ENCODE measurements at regions of chr10 and their contacts with region 1.

Region 1: DNA sequence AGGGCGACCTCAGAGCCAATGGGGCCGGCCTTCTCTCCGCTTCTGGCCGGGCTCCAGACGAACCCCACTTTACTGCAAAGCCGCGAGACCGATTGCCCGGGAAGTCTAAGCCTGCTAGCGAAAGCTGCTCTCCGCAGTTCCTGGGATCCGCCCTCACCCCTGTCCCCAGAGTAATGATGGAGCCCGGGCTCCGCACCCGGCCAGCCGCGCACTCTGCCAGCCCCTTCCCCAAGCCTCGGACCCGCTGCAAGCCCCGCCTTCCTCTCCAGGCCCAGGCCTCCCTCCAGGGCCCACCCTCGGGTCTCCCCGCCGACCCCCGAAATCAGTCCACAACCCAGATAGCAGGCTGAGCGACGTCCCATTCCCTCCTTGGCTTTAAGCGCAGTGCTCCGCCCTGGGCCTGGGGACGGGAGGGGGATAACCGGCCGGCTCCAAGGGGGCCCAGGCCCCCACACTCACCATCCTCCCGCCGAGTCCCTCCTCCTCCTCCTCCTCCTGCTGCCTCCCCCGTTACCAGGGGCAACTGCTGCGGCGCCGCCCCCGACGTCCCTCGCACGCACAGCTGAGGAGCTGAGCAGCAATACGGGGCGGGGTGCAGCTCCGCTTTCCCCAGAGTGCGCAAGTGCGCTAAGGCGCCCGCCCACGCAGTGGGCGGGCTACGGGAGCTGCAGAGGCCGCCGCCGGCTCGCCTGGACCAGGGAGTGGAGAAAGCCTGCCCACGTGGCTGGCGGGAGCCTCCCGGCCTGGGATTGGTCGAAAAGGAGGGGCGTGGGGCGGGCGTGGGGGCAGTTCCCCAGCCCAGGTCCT is at the start of gene ARL3:
- DNase-seq: peak; percentile 97 to 99 (median 98)
- H3K4me3 ChIP-seq: peak within 1 kb of the TSS; percentile 67
- H3K27ac ChIP-seq: peak within 1 kb of the TSS; percentile 82 to 90
- H3K4me1 ChIP-seq: peaks cover 11% of the 10 kb centered on the region
- H3K27me3 ChIP-seq: no peaks in the 10 kb centered on the region
- CTCF ChIP-seq: peak in 2 of 3 donors; percentile 37 to 52
- EP300 ChIP-seq: peak; percentile 39
- POLR2A ChIP-seq: peak; percentile 86
- total RNA-seq, gene ARL3: 9.5 to 25.6 (median 23.3) TPM

Region 2: DNA sequence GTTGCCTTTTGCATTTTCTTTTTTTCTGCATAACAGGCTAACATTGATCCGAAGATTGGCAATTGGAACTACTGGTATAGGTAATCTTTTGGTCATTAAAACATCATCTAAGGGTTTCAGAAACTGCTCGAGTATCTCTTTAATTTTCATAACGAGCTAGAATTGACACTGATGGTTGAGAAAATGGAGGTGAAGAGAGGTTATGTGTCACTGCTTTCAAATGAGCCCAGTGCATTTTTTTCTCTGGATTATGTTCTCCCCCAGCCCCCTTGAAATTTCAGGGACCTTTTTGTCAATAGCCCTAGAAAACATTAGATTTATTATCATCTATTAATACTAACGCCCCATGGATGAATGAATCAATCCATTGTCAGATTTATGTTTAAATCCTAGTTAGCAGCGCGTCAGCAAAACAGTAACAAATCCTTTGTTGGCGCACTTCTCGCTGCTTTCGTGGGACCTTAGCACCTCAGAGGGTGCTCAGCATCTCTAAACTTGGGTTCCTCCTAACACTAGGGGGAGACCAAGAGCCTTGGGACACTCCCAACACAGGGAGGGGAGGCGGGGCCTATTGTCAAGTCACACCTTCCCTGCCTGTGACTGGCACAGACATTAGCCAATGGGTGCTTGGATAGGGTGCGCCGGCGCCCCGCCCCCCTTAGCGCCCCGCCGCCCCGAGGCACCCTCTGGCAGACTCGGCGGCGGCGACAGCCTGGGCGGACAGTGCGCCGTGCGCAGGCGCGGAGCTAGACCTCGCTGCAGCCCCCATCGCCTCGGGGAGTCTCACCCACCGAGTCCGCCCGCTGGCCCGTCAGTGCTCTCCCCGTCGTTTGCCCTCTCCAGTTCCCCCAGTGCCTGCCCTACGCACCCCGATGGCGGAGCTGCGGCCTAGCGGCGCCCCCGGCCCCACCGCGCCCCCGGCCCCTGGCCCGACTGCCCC is 210.5 kb before region 1 on chr10 and contains the start of gene SUFU:
- intact Hi-C with region 1: loop called in 1 of 4 experiments (anchors 10 kb)
- DNase-seq: peak; percentile 98 to 99 (median 98)
- H3K4me3 ChIP-seq: peak within 1 kb of the TSS; percentile 97
- H3K27ac ChIP-seq: peak within 1 kb of the TSS; percentile 8 to 68
- H3K4me1 ChIP-seq: peaks cover 5% of the 10 kb centered on the region
- H3K27me3 ChIP-seq: no peaks in the 10 kb centered on the region
- CTCF ChIP-seq: peak; percentile 82 to 97 (median 95)
- EP300 ChIP-seq: no peak
- POLR2A ChIP-seq: no peak
- total RNA-seq, gene SUFU: 4.6 to 19.1 (median 16.1) TPM

Region 3: DNA sequence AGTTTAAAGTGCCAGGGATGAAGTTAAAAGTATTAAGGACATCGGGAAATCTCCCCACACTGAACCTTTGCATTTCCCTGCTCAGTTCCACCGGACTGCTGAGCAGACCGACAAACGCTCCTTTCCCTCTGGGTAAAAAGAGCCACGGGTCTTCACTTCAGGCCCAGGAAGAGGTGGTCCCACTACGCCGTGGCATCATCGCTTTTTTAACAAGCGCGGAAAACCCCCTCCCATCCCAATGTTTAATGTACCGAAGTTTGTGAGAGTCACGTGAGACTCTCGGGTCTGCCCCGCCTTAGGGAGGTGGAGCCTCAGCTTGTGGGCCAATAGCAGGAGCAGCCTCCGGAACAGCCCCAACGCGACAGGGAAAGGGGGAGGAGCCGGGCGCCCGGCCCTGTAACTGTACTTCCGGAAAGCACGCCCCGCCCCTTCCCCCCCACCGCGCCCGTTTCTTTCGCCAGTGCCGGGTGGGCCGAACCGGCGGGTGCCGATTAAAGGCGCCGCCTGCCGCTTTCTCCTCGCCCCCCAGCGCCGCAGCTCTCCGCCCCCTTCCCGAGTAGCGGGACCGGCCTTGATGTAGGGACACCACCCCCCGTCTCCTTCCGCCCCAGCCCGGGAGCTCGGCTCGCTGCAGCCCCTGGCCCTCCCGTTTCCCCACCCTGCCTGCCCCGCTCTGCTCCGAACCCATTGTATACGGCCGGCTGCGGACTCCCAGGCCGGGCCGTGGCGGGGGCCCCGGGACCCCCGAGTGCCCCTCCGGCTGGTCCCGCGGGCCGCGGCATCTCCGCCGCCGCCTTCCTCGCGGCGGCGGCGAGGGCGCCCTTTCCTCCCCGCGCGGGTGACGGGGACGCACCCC is 71.9 kb before region 1 on chr10:
- intact Hi-C with region 1: loop called in 3 of 4 experiments (anchors 2 to 10 kb)
- DNase-seq: peak; percentile 99
- H3K4me3 ChIP-seq: peak overlapping the region; percentile 69
- H3K27ac ChIP-seq: peak overlapping the region; percentile 91 to 98
- H3K4me1 ChIP-seq: peaks cover 3% of the 10 kb centered on the region
- H3K27me3 ChIP-seq: no peaks in the 10 kb centered on the region
- CTCF ChIP-seq: peak in 2 of 3 donors; percentile 11 to 25
- EP300 ChIP-seq: no peak
- POLR2A ChIP-seq: peak; percentile 94

Region 4: GRCh38 chr10:102678842-102679289 is 35.2 kb before region 1 on chr10:
- intact Hi-C with region 1: loop called in 1 of 4 experiments (anchors 5 kb)
- DNase-seq: peak; percentile 70 to 82 (median 74)
- H3K4me3 ChIP-seq: no peak overlapping the region
- H3K27ac ChIP-seq: peak overlapping the region in 1 of 2 donors; percentile 32
- H3K4me1 ChIP-seq: peaks cover 30% of the 10 kb centered on the region
- H3K27me3 ChIP-seq: no peaks in the 10 kb centered on the region
- CTCF ChIP-seq: peak; percentile 11 to 64 (median 43)
- EP300 ChIP-seq: no peak
- POLR2A ChIP-seq: no peak